Caco-2 (cell line): ENCODE measurements at regions of chr16 and their contacts with region 1.

Region 1: DNA sequence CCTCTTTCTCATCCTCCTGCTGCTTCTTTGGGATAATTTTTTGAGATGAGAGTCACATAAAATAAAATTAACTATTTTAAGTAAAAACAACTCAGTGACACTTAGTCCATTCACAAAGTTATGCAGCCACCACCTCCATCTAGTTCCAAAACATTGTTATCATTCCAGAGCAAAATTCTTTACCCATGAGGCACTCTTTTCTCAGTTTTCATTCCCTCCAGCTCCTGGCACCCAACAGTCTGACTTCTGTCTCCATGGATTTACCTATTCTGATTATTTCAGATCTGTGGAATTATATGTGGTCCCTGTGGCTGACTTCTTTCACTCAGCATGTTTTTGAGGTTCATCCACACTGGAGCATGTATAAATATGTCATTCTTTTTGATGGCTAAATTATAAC is 239.9 kb upstream of the DYNLRB2 start:
- DNase-seq: peak in 1 of 2 experiments; percentile 26
- H3K4me3 ChIP-seq: no peak overlapping the region
- H3K4me3 Mint-ChIP-seq: peak overlapping the region; percentile 23
- H3K27ac Mint-ChIP-seq: peak overlapping the region; percentile 65
- H3K4me1 ChIP-seq: peaks cover 76% of the 10 kb centered on the region
- H3K4me1 Mint-ChIP-seq: peaks cover 60% of the 10 kb centered on the region
- H3K27me3 ChIP-seq: no peaks in the 10 kb centered on the region
- H3K27me3 Mint-ChIP-seq: no peaks in the 10 kb centered on the region
- CTCF ChIP-seq: no peak

Region 2: GRCh38 chr16:80200079-80200478 is 100.8 kb before region 1 on chr16:
- CTCF ChIA-PET with region 1: no interaction called
- POLR2A ChIA-PET with region 1: no interaction called
- intact Hi-C with region 1: loop called (anchors 5 kb)
- DNase-seq: no peak
- H3K4me3 ChIP-seq: no peak overlapping the region
- H3K4me3 Mint-ChIP-seq: no peak overlapping the region
- H3K27ac Mint-ChIP-seq: no peak overlapping the region
- H3K4me1 ChIP-seq: peaks cover 37% of the 10 kb centered on the region
- H3K4me1 Mint-ChIP-seq: peaks cover 26% of the 10 kb centered on the region
- H3K27me3 ChIP-seq: no peaks in the 10 kb centered on the region
- H3K27me3 Mint-ChIP-seq: no peaks in the 10 kb centered on the region
- CTCF ChIP-seq: no peak

Region 3: GRCh38 chr16:80265624-80266306 is 35.1 kb before region 1 on chr16:
- CTCF ChIA-PET with region 1: interaction called, 3 read pairs
- POLR2A ChIA-PET with region 1: no interaction called
- intact Hi-C with region 1: loop called (anchors 2 kb)
- DNase-seq: peak; percentile 69 to 84
- H3K4me3 ChIP-seq: no peak overlapping the region
- H3K4me3 Mint-ChIP-seq: peak overlapping the region; percentile 71
- H3K27ac Mint-ChIP-seq: peak overlapping the region; percentile 96
- H3K4me1 ChIP-seq: peaks cover 47% of the 10 kb centered on the region
- H3K4me1 Mint-ChIP-seq: peaks cover 45% of the 10 kb centered on the region
- H3K27me3 ChIP-seq: no peaks in the 10 kb centered on the region
- H3K27me3 Mint-ChIP-seq: no peaks in the 10 kb centered on the region
- CTCF ChIP-seq: no peak

Region 4: DNA sequence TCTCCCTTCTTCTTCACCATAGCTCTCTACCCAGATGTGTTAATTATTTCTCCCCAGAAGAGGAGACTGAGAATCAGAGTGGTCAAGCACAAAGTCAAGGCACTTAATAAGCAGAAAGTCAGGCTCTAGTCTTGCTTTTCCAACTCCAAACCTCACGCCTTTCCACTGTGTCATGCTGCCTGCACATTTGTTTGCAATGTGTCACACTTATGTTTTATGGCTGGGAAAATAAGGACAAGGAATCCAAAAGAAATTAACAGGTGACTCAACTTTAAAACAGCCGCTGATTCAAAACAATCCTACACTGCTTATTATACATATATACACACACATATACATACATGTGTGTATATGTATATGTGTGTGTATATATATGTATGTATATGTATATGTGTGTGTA is 15.8 kb before region 1 on chr16:
- CTCF ChIA-PET with region 1: no interaction called
- POLR2A ChIA-PET with region 1: no interaction called
- intact Hi-C with region 1: no loop called
- DNase-seq: no peak
- H3K4me3 ChIP-seq: no peak overlapping the region
- H3K4me3 Mint-ChIP-seq: no peak overlapping the region
- H3K27ac Mint-ChIP-seq: no peak overlapping the region
- H3K4me1 ChIP-seq: no peaks in the 10 kb centered on the region
- H3K4me1 Mint-ChIP-seq: no peaks in the 10 kb centered on the region
- H3K27me3 ChIP-seq: no peaks in the 10 kb centered on the region
- H3K27me3 Mint-ChIP-seq: no peaks in the 10 kb centered on the region
- CTCF ChIP-seq: no peak

Region 5: DNA sequence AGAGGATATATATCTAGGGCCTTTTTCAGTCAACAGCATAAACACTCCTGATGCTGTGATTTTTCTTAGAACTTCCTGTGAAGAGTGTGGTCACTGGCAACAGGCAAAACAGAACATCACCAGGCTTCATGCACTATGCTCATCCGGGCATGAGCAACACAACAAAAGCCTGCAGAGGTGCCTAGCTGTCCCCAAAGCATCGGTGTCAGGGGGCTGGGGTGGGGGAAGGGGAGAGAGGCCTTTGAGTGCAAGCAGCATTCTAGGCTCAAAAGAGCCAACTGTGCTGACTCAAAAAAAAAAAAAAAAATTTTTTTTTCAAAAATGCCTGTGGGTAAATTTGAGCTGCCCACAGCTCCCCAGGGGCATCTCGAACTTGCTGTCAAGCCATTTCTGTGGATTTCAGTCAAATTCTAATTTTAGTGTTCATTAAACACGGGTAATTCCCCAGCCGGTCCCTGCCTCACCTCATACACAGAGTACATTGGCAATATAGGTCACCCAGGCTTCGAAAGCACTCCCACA is 45.3 kb after region 1 on chr16:
- CTCF ChIA-PET with region 1: no interaction called
- POLR2A ChIA-PET with region 1: no interaction called
- intact Hi-C with region 1: loop called (anchors 2 kb)
- DNase-seq: no peak
- H3K4me3 ChIP-seq: no peak overlapping the region
- H3K4me3 Mint-ChIP-seq: no peak overlapping the region
- H3K27ac Mint-ChIP-seq: no peak overlapping the region
- H3K4me1 ChIP-seq: peaks cover 46% of the 10 kb centered on the region
- H3K4me1 Mint-ChIP-seq: peaks cover 23% of the 10 kb centered on the region
- H3K27me3 ChIP-seq: no peaks in the 10 kb centered on the region
- H3K27me3 Mint-ChIP-seq: no peaks in the 10 kb centered on the region
- CTCF ChIP-seq: no peak